ENCODE measurements at regions of chr4 and their contacts with region 1.

Region 1: GRCh38 chr4:3346146-3346545 is 53.3 kb downstream of the RGS12 start:
- DNase-seq: peak; percentile 34 to 44
- H3K4me3 ChIP-seq: no peak overlapping the region
- H3K27ac ChIP-seq: no peak overlapping the region
- H3K4me1 ChIP-seq: peaks cover 0 to 4% of the 10 kb centered on the region in 2 donors
- H3K27me3 ChIP-seq: no peaks in the 10 kb centered on the region
- CTCF ChIP-seq: peak; percentile 62 to 87 (median 82)
- POLR2A ChIP-seq: no peak

Region 2: GRCh38 chr4:3226467-3226866 is 119.7 kb before region 1 on chr4:
- intact Hi-C with region 1: no loop called
- DNase-seq: no peak
- H3K4me3 ChIP-seq: no peak overlapping the region
- H3K27ac ChIP-seq: no peak overlapping the region
- H3K4me1 ChIP-seq: no peaks in the 10 kb centered on the region
- H3K27me3 ChIP-seq: no peaks in the 10 kb centered on the region
- CTCF ChIP-seq: no peak
- POLR2A ChIP-seq: no peak

Region 3: GRCh38 chr4:3399277-3400194 is 53.4 kb after region 1 on chr4:
- intact Hi-C with region 1: no loop called
- DNase-seq: peak in 1 of 2 donors; percentile 12
- H3K4me3 ChIP-seq: no peak overlapping the region
- H3K27ac ChIP-seq: no peak overlapping the region
- H3K4me1 ChIP-seq: no peaks in the 10 kb centered on the region
- H3K27me3 ChIP-seq: no peaks in the 10 kb centered on the region
- CTCF ChIP-seq: no peak
- POLR2A ChIP-seq: no peak

Region 4: GRCh38 chr4:3442959-3443749 is 97.0 kb after region 1 on chr4:
- intact Hi-C with region 1: loop called (anchors 2 kb)
- DNase-seq: peak; percentile 29 to 35
- H3K4me3 ChIP-seq: no peak overlapping the region
- H3K27ac ChIP-seq: no peak overlapping the region
- H3K4me1 ChIP-seq: no peaks in the 10 kb centered on the region
- H3K27me3 ChIP-seq: no peaks in the 10 kb centered on the region
- CTCF ChIP-seq: peak; percentile 72 to 93 (median 84)
- POLR2A ChIP-seq: no peak

Measured in thyroid gland (tissue), 4 donors.